ENCODE measurements at regions of chr5 and their contacts with region 1.

Region 1: DNA sequence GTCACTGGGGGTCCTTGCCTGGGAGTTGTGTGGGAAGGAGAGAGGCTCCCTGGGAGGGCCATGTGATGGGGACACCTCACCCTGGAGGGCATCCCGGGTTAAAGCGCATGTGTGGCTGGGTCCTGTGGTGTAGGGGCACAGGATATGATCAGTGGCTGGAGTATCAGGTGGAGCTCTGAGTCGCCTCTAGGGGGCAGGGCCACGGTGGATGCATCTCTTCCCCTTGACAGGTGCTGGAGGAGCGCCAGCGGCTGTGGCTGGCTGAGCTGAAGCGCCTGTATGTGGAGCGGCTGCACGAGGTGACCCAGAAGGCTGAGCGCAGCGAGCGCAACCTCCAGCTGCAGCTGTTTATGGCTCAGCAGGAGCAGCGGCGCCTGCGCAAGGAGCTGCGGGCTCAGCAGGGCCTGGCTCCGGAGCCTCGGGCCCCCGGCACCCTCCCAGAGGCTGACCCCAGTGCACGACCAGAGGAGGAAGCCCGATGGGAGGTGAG is 7.6 kb downstream of the N4BP3 start:
- DNase-seq: peak; percentile 69
- ATAC-seq: peak; percentile 82
- H3K4me3 ChIP-seq: peak overlapping the region; percentile 47; the same call in 1 of the 2 replicates
- H3K27ac ChIP-seq: peak overlapping the region; percentile 47; the same call in 1 of the 2 replicates
- H3K4me1 ChIP-seq: peaks cover 39% of the 10 kb centered on the region
- H3K27me3 ChIP-seq: no peaks in the 10 kb centered on the region
- CTCF ChIP-seq: peak; percentile 76 to 88 (median 86)
- EP300 ChIP-seq: no peak
- POLR2A ChIP-seq: no peak
- RAD21 ChIP-seq: peak; percentile 35; the same call in 1 of the 2 replicates

Region 2: DNA sequence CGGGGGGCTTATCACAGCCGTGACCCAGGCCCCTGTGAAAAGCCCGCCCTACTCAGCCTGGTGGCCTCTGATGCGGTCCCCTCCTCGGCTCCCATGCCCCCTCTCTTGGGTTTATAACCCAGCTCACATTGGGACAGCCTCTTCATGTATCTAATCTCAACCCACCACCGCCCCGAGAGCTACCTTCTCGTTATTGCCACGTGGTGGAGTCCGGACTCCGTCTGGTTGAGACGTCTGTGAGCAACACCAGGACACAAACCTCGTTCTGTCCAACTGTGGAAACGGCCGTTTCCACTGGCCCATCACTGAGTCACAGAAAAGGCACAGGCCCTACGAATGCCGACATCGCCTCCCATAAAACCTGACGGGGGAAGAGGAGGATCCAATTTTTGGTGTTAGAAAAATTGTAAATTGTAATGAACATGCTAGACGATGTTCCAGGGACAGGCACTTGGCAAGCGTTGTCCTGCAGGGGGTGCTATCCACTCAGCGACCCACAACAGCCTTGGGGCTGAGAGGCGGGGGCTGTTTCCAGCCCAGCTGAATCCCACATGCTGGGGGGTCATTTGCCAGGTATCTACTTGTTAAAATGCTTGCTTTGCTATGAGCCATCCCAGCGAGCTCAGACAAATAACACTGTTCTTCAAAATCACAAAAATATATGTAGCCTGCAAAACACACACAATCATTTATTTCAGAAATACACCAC is 44.9 kb before region 1 on chr5:
- CTCF ChIA-PET with region 1: interaction called, 8 read pairs
- POLR2A ChIA-PET with region 1: no interaction called
- RAD21 ChIA-PET with region 1: interaction called, 5 read pairs
- SMC1A ChIA-PET with region 1: interaction called, 14 read pairs
- in situ Hi-C with region 1: no loop called
- intact Hi-C with region 1: no loop called
- DNase-seq: no peak
- ATAC-seq: peak; percentile 96
- H3K4me3 ChIP-seq: no peak overlapping the region
- H3K27ac ChIP-seq: no peak overlapping the region
- H3K4me1 ChIP-seq: no peaks in the 10 kb centered on the region; the same call in 1 of the 2 replicates
- H3K27me3 ChIP-seq: no peaks in the 10 kb centered on the region
- CTCF ChIP-seq: peak; percentile 81 to 93 (median 85)
- EP300 ChIP-seq: no peak
- POLR2A ChIP-seq: no peak
- RAD21 ChIP-seq: peak; percentile 96

Region 3: GRCh38 chr5:178106556-178107250 is 14.2 kb before region 1 on chr5:
- CTCF ChIA-PET with region 1: interaction called, 21 read pairs
- POLR2A ChIA-PET with region 1: interaction called, 7 read pairs
- RAD21 ChIA-PET with region 1: interaction called, 3 read pairs
- SMC1A ChIA-PET with region 1: interaction called, 7 read pairs
- in situ Hi-C with region 1: no loop called
- intact Hi-C with region 1: no loop called
- DNase-seq: no peak
- ATAC-seq: peak; percentile 88
- H3K4me3 ChIP-seq: no peak overlapping the region
- H3K27ac ChIP-seq: no peak overlapping the region
- H3K4me1 ChIP-seq: peaks cover 11% of the 10 kb centered on the region
- H3K27me3 ChIP-seq: no peaks in the 10 kb centered on the region
- CTCF ChIP-seq: no peak
- EP300 ChIP-seq: no peak
- POLR2A ChIP-seq: no peak
- RAD21 ChIP-seq: no peak

Region 4: DNA sequence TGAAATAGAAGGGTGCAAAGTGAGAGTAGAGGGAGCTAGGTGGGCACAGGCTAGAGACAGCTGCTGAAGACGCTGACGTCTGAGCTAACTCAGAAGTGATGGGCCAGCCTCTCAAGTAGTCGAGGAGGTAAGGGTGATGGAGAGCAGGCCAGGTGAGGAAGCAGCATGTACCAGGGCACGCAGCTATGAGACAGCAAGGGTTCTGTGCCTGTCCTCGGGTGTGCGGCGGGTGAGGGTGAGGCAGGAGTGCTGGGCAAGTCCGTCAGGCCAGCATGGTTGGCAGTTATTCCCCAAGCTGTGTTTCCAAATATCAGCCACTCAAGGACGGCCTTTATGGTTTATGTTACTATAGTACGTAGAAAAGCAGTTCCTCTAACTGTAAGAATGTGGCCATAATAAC is 16.1 kb after region 1 on chr5:
- CTCF ChIA-PET with region 1: interaction called, 20 read pairs
- POLR2A ChIA-PET with region 1: interaction called, 7 read pairs
- RAD21 ChIA-PET with region 1: interaction called, 3 read pairs
- SMC1A ChIA-PET with region 1: interaction called, 5 read pairs
- in situ Hi-C with region 1: no loop called
- intact Hi-C with region 1: no loop called
- DNase-seq: no peak
- ATAC-seq: no peak
- H3K4me3 ChIP-seq: no peak overlapping the region
- H3K27ac ChIP-seq: no peak overlapping the region
- H3K4me1 ChIP-seq: no peaks in the 10 kb centered on the region; the same call in 1 of the 2 replicates
- H3K27me3 ChIP-seq: no peaks in the 10 kb centered on the region
- CTCF ChIP-seq: no peak
- EP300 ChIP-seq: no peak
- POLR2A ChIP-seq: no peak
- RAD21 ChIP-seq: no peak

Region 5: DNA sequence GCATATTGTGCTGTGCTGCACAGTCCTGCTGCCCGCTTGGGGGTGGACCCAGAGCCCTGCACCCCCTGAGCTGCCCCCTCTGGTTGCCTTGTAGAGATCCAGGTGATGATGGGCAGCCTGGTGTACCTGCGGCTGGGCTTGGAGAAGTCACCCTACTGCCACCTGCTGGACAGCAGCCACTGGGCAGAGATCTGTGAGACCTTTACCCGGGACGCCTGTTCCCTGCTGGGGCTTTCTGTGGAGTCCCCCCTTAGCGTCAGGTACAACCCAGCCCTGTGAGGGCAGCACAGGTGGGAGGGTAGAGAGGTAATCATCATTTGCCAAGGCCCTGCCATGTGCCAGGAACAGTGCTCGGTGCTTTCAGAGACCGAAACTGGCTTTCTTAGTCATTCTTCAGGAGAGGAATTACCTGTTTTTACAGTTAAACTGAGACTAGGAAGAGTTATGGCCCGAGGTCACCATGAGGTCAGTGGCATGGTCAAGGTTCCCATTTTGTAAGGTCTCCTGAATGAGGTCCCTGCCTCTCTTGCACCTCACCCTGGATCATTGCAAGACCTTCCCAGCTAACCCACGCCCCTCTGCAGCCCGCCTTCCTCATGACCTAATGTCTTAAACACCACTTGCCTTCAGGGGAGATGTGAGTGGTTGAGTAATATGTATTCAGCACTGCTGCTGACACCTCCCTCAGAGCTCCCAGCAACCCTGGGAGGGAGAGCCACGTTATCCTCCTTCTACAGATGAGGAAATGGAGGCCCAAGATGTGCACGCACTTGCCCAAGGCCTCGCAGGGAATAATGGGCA is 25.3 kb after region 1 on chr5:
- CTCF ChIA-PET with region 1: interaction called, 14 read pairs
- POLR2A ChIA-PET with region 1: interaction called, 4 read pairs
- RAD21 ChIA-PET with region 1: interaction called, 4 read pairs
- SMC1A ChIA-PET with region 1: interaction called, 10 read pairs
- in situ Hi-C with region 1: no loop called
- intact Hi-C with region 1: no loop called
- DNase-seq: no peak
- ATAC-seq: peak; percentile 98
- H3K4me3 ChIP-seq: no peak overlapping the region
- H3K27ac ChIP-seq: no peak overlapping the region
- H3K4me1 ChIP-seq: peaks cover 13% of the 10 kb centered on the region
- H3K27me3 ChIP-seq: no peaks in the 10 kb centered on the region
- CTCF ChIP-seq: peak; percentile 85 to 93 (median 89); a peak in 5 of 6 replicates
- EP300 ChIP-seq: no peak
- POLR2A ChIP-seq: peak; percentile 33; the same call in 1 of the 2 replicates
- RAD21 ChIP-seq: peak; percentile 56

Region 6: DNA sequence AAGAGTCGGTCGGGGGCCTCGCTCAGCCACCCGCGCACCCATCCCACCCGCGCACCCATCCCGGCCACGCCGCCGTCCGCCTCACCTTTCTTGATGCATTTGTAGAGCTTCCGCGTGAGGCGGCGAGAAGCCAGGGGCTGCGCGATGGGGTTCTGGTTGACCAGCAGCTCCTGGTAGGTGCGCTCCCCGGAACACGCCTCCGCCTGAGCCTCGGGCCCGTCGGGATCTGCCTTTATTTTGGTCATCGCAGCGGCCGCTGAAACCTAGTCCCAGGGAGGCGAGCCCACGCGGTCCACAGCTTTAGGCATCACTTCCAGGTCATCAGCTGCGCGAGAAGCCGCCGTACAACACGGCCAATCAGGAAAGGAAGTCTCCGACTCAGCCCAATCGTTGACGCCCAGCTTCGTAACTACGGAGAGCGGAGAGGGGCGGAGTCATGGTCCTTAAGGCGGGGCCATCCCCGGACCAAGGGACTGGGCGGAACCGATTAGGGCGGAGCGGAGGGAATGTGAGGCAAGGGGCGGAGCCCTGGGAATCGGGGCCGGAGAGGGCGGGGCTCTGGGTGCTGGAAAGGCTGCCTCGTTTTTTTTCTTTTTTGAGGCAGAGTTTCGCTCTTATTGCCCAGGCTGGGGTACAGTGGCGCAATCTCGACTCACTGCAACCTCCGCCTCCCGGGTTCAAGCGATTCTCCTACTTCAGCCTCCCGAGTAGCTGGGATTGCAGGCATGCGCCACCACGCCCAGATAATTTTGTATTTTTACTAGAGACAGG is 32.8 kb after region 1 on chr5 and contains the start of gene NHP2:
- CTCF ChIA-PET with region 1: interaction called, 13 read pairs
- POLR2A ChIA-PET with region 1: interaction called, 3 read pairs
- RAD21 ChIA-PET with region 1: interaction called, 4 read pairs
- SMC1A ChIA-PET with region 1: interaction called, 4 read pairs
- in situ Hi-C with region 1: no loop called
- intact Hi-C with region 1: no loop called
- DNase-seq: peak; percentile 92
- ATAC-seq: peak; percentile 99
- H3K4me3 ChIP-seq: peak within 1 kb of the TSS; percentile 89
- H3K27ac ChIP-seq: peak within 1 kb of the TSS; percentile 67
- H3K4me1 ChIP-seq: peaks cover 7% of the 10 kb centered on the region; the same call in 1 of the 2 replicates
- H3K27me3 ChIP-seq: no peaks in the 10 kb centered on the region
- CTCF ChIP-seq: no peak
- EP300 ChIP-seq: no peak
- POLR2A ChIP-seq: peak; percentile 81
- RAD21 ChIP-seq: no peak
- polyA plus RNA-seq, gene NHP2: 39.2 to 127 TPM

Region 7: DNA sequence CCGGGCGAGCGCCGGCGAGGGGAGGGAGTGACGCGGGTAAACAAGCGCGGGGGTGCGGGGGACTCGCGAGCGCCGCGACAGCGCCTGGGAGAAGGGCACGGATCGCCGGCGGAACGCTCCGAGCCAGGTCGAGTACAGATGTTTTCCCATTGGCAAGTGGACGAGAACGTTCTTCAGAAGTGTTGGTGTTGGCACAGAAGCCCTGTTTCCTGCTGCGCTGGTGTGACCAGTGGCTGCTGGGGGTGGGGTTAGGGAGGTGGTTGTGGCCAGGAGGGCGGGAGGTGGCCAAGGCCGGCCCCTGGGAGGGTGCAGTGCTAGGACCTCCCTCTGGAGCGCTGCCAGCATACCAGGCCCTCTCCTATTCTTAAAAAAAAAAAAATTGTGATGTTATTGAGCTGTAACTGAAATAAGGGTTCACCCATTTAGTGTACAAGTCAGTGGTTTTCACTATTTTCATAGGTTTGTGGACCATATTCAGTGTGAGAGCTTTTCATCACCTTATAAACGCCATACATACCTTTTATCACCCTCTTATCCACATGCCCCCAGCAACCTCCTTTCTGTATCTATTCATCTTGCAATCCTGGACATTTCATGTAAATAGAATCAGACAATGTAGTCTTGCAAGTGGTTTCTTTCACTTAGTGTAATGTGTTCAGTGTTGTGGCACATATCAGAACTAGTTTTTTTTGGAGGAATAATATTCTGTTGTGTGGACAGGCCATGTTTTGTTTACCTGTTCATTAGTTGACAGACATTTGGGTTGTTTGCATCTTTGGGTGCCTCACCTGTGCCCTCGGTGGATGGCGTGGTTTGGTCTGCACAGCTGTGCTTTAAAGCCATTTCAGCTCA is 1700.9 kb after region 1 on chr5:
- CTCF ChIA-PET with region 1: no interaction called
- POLR2A ChIA-PET with region 1: no interaction called
- RAD21 ChIA-PET with region 1: no interaction called
- SMC1A ChIA-PET with region 1: no interaction called
- in situ Hi-C with region 1: loop called (anchors 10 kb)
- intact Hi-C with region 1: no loop called
- DNase-seq: no peak
- ATAC-seq: peak; percentile 74
- H3K4me3 ChIP-seq: peak overlapping the region; percentile 93
- H3K27ac ChIP-seq: peak overlapping the region; percentile 96
- H3K4me1 ChIP-seq: peaks cover 35% of the 10 kb centered on the region
- H3K27me3 ChIP-seq: no peaks in the 10 kb centered on the region
- CTCF ChIP-seq: no peak
- EP300 ChIP-seq: no peak
- POLR2A ChIP-seq: peak; percentile 73
- RAD21 ChIP-seq: no peak

Measured in GM12878 (cell line).